ENCODE measurements at regions of chr17 and their contacts with region 1.

Region 1: GRCh38 chr17:17823433-17824118 is 13.2 kb downstream of the SREBF1 start:
- DNase-seq: peak; percentile 91

Region 2: GRCh38 chr17:18038861-18039534 is 215.4 kb after region 1 on chr17 and contains the starts of genes ATPAF2 and GID4:
- intact Hi-C with region 1: loop called (anchors 5 kb)
- DNase-seq: peak; percentile 100
- total RNA-seq, gene ATPAF2: 31.5 TPM
- total RNA-seq, gene GID4: 17.9 TPM

Measured in cardiac septum (tissue), 1 donor.